Activated CD4-positive, alpha-beta memory T cell treated with anti-CD3 and anti-CD28 coated beads for 36 hours (primary cell): ENCODE measurements at regions of chr6 and their contacts with region 1.

Region 1: GRCh38 chr6:31203345-31203979 is 33.0 kb upstream of the POU5F1 start:
- DNase-seq: peak; percentile 76
- H3K4me3 Mint-ChIP-seq: peak overlapping the region; percentile 78
- H3K27ac Mint-ChIP-seq: peak overlapping the region; percentile 94
- H3K4me1 Mint-ChIP-seq: peaks cover 57% of the 10 kb centered on the region
- H3K27me3 Mint-ChIP-seq: no peaks in the 10 kb centered on the region

Region 2: GRCh38 chr6:31271641-31272357 is 68.3 kb after region 1 on chr6 and contains the start of gene HLA-C:
- CTCF ChIA-PET with region 1: no interaction called
- POLR2A ChIA-PET with region 1: interaction called, 6 read pairs
- intact Hi-C with region 1: loop called (anchors 1 kb)
- DNase-seq: peak; percentile 95
- H3K4me3 Mint-ChIP-seq: peak within 1 kb of the TSS; percentile 95
- H3K27ac Mint-ChIP-seq: peak within 1 kb of the TSS; percentile 99
- H3K4me1 Mint-ChIP-seq: peaks cover 51% of the 10 kb centered on the region
- H3K27me3 Mint-ChIP-seq: no peaks in the 10 kb centered on the region
- total RNA-seq, gene HLA-C: 976 to 983 TPM

Region 3: GRCh38 chr6:31356946-31357466 is 153.5 kb after region 1 on chr6 and contains the start of gene HLA-B:
- CTCF ChIA-PET with region 1: interaction called, 3 read pairs
- POLR2A ChIA-PET with region 1: interaction called, 5 read pairs
- intact Hi-C with region 1: loop called (anchors 1 kb)
- DNase-seq: peak; percentile 90
- H3K4me3 Mint-ChIP-seq: peak within 1 kb of the TSS; percentile 99
- H3K27ac Mint-ChIP-seq: peak within 1 kb of the TSS; percentile 99
- H3K4me1 Mint-ChIP-seq: peaks cover 60% of the 10 kb centered on the region
- H3K27me3 Mint-ChIP-seq: no peaks in the 10 kb centered on the region
- total RNA-seq, gene HLA-B: 3,016 to 3,060 TPM

Region 4: GRCh38 chr6:31462964-31463870 is 259.8 kb after region 1 on chr6:
- CTCF ChIA-PET with region 1: no interaction called
- POLR2A ChIA-PET with region 1: no interaction called
- intact Hi-C with region 1: loop called (anchors 1 kb)
- DNase-seq: peak; percentile 94
- H3K4me3 Mint-ChIP-seq: peak overlapping the region; percentile 100
- H3K27ac Mint-ChIP-seq: peak overlapping the region; percentile 96
- H3K4me1 Mint-ChIP-seq: peaks cover 58% of the 10 kb centered on the region
- H3K27me3 Mint-ChIP-seq: no peaks in the 10 kb centered on the region

Region 5: DNA sequence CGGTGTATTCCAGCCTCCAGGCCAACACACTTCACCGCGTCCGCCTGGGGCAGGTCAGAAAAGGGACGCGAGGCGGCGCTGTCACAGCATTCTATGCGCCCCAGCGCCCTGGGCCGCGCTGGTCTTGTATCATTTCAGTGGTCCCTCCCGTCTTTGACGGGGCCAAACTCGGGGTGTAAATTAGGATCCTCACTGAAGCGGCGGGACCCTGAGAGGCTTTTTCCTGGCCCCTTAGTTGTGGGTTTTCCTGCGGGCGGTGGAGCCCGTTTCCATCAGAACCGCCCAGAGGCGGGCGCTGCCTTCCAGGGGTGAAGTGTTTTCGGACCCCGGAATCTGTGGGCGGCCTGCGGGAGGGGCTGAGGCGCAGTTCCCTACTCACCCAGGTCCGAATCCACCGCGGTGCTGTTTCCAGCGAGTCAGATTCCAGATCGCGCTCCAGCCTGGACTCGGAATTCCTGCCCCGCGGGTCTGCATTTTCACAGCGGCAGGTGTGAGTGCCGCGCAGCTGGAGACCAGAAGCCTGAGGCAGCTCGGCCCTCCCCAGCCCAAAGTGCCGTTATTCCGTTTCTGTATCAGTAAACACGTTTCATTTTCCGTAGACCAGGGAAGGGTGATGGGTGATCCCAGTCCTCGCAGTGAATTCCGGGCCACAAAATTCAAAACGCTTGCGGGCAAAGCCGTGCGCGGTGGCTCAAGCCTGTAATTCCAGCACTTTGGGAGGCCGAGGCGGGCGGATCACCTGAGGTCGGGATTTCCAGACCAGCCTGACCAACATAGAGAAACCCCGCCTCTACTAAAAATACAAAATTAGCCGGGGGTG is 290.6 kb after region 1 on chr6:
- CTCF ChIA-PET with region 1: no interaction called
- POLR2A ChIA-PET with region 1: no interaction called
- intact Hi-C with region 1: loop called (anchors 10 kb)
- DNase-seq: peak; percentile 89
- H3K4me3 Mint-ChIP-seq: peak overlapping the region; percentile 90
- H3K27ac Mint-ChIP-seq: peak overlapping the region; percentile 94
- H3K4me1 Mint-ChIP-seq: peaks cover 42% of the 10 kb centered on the region
- H3K27me3 Mint-ChIP-seq: no peaks in the 10 kb centered on the region